Testis (tissue), 5 donors: ENCODE measurements at regions of chr13 and their contacts with region 1.

Region 1: GRCh38 chr13:40682449-40683240 is 16.2 kb upstream of the FOXO1 start:
- DNase-seq: no peak
- H3K4me3 ChIP-seq: no peak overlapping the region
- H3K27ac ChIP-seq: no peak overlapping the region
- H3K4me1 ChIP-seq: no peaks in the 10 kb centered on the region
- H3K27me3 ChIP-seq: no peaks in the 10 kb centered on the region
- CTCF ChIP-seq: peak in 2 of 3 experiments; percentile 23 to 66
- POLR2A ChIP-seq: no peak

Region 2: DNA sequence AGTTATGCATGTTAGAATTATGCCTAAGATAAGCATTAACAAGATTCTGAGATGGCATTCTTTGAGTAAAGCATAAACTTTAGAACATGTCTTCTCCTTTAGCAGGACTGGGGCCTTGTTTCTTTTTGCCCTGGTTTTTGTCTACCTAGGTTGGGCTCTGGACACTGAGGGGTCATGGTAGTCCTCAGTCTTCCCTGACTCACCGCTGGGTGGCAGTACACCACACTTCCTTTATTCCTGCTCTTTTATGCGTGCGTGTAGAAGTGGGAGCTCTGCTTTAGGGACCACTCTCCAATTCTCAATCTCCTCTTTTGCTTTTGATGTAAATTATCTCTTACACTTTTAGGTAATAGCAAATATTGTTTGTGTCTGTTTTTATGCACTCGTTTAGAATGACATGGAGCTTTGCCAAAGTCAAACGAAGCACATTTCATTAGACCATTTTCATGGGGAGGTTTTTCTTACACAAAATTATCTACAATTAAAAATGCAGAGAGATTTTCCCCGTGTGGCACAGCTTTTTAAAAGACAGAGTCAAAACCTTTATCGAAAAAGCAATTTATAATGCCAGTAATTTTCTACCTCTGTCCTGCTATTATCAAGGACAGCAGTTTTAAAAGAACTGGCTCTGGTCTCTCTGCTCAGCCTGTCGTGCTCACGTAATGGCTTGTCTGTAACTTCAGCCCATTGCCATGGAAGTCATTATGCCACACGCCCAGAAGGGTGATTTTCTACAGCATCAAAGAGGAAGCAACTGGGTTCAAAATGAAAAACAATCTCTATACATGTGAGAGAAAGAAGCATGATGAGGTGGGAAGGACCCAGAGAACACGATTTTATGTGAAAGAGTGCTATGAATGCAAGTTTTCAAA is 613.2 kb before region 1 on chr13:
- intact Hi-C with region 1: loop called (anchors 5 kb)
- DNase-seq: peak; percentile 87
- H3K4me3 ChIP-seq: no peak overlapping the region
- H3K27ac ChIP-seq: no peak overlapping the region
- H3K4me1 ChIP-seq: peaks cover 6% of the 10 kb centered on the region
- H3K27me3 ChIP-seq: no peaks in the 10 kb centered on the region
- CTCF ChIP-seq: peak; percentile 67 to 83 (median 77)
- POLR2A ChIP-seq: no peak

Region 3: GRCh38 chr13:40992678-40993518 is 310.3 kb after region 1 on chr13:
- intact Hi-C with region 1: no loop called
- DNase-seq: no peak
- H3K4me3 ChIP-seq: no peak overlapping the region
- H3K27ac ChIP-seq: no peak overlapping the region
- H3K4me1 ChIP-seq: peaks cover 20% of the 10 kb centered on the region
- H3K27me3 ChIP-seq: no peaks in the 10 kb centered on the region
- CTCF ChIP-seq: no peak
- POLR2A ChIP-seq: no peak

Region 4: DNA sequence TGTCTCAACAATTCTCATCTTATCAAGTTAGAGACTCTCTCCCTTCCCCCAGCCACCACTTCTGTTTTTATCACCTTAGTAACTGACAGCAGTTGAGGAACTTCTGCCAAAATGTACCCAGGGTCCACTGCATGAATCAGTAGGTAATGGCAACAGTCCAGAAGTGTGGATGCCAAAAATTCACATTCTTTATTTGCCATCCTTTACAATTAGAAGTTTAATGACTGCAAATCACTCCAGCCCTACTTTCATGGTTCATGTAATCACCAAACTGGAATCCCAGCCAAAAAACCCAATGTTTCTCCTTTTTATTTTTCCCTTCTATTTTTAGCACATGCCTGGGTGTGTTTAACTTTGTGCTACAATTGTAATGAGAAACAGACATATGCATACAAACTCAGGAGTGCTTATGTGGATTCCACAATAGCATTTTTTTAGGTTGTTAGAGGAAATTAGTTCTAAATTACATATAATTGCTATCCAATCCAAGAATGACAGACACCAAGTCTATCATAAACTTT is 1018.2 kb after region 1 on chr13:
- intact Hi-C with region 1: no loop called
- DNase-seq: no peak
- H3K4me3 ChIP-seq: no peak overlapping the region
- H3K27ac ChIP-seq: no peak overlapping the region
- H3K4me1 ChIP-seq: no peaks in the 10 kb centered on the region
- H3K27me3 ChIP-seq: no peaks in the 10 kb centered on the region
- CTCF ChIP-seq: no peak
- POLR2A ChIP-seq: no peak